WTC11 (cell line): ENCODE measurements at regions of chr10 and their contacts with region 1.

Region 1: GRCh38 chr10:103659674-103660363 is 166.3 kb downstream of the NEURL1 start:
- DNase-seq: peak; percentile 23
- ATAC-seq: peak; percentile 47
- H3K4me3 Mint-ChIP-seq: no peak overlapping the region; the same call in 1 of the 2 replicates
- H3K27ac Mint-ChIP-seq: no peak overlapping the region; the same call in 1 of the 2 replicates
- H3K4me1 Mint-ChIP-seq: peaks cover 16% of the 10 kb centered on the region
- H3K27me3 Mint-ChIP-seq: no peaks in the 10 kb centered on the region
- CTCF ChIP-seq: no peak

Region 2: GRCh38 chr10:103584216-103585010 is 75.4 kb before region 1 on chr10:
- CTCF ChIA-PET with region 1: no interaction called
- POLR2A ChIA-PET with region 1: no interaction called
- DNase-seq: peak; percentile 43
- ATAC-seq: peak; percentile 24
- H3K4me3 Mint-ChIP-seq: peak overlapping the region; percentile 50; the same call in 1 of the 2 replicates
- H3K27ac Mint-ChIP-seq: no peak overlapping the region
- H3K4me1 Mint-ChIP-seq: 0 out of 2 replicates have a peak, but pooled peaks cover 2% of the 10 kb centered on the region
- H3K27me3 Mint-ChIP-seq: peaks cover 42% of the 10 kb centered on the region
- CTCF ChIP-seq: no peak

Region 3: GRCh38 chr10:103637927-103638557 is 21.8 kb before region 1 on chr10:
- CTCF ChIA-PET with region 1: interaction called, 14 read pairs
- POLR2A ChIA-PET with region 1: interaction called, 12 read pairs
- DNase-seq: no peak
- ATAC-seq: no peak
- H3K4me3 Mint-ChIP-seq: no peak overlapping the region
- H3K27ac Mint-ChIP-seq: no peak overlapping the region
- H3K4me1 Mint-ChIP-seq: peaks cover 51% of the 10 kb centered on the region
- H3K27me3 Mint-ChIP-seq: no peaks in the 10 kb centered on the region
- CTCF ChIP-seq: no peak

Region 4: DNA sequence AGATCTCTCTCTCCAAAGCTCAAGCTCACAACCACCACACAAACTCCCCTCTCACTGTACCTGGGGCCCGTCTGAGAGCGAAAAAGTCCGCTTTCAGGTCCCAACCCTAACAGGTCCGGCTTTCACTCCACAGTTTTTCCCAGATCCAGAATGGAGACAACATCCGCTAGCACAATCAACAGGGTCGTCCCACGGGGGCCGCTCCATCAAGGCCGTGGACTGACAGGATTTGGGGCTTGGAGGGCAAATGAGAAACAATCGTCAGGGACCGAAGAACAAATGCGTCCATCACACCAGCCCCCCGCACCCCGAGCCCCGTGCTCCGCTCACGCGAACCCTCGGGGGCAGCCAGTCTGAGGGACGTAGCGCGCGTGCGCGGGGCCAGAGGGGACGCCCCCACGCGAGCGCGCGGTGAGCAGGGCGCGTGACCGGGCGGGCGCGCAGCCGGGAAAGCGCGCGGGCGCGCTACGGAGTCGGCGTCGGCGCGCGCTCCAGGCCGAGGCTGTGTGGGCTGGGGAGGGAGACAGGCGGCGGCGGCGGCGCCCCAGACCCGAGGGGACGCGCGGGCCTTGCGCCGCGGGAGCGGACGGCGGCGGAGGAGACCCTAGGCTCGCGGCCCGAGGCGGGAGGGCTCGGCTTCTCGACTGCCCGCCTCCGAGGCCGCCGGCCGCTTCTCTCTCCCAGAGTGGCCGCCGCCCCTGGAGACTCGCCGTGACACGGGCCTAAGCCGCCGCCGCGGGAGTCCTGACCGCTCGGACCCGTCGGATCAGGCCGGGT is 307.0 kb after region 1 on chr10 and contains the start of gene SLK:
- CTCF ChIA-PET with region 1: no interaction called
- POLR2A ChIA-PET with region 1: no interaction called
- DNase-seq: peak; percentile 57
- ATAC-seq: peak; percentile 84
- H3K4me3 Mint-ChIP-seq: peak within 1 kb of the TSS; percentile 92
- H3K27ac Mint-ChIP-seq: peak within 1 kb of the TSS; percentile 47; the same call in 1 of the 2 replicates
- H3K4me1 Mint-ChIP-seq: peaks cover 31% of the 10 kb centered on the region
- H3K27me3 Mint-ChIP-seq: peaks cover 13% of the 10 kb centered on the region
- CTCF ChIP-seq: no peak
- total RNA-seq, gene SLK: 17.6 to 19.2 TPM (median 18.9 TPM) in 3 replicates

Region 5: GRCh38 chr10:104322416-104322782 is 662.6 kb after region 1 on chr10:
- CTCF ChIA-PET with region 1: no interaction called
- POLR2A ChIA-PET with region 1: no interaction called
- DNase-seq: no peak
- ATAC-seq: no peak
- H3K4me3 Mint-ChIP-seq: no peak overlapping the region
- H3K27ac Mint-ChIP-seq: peak overlapping the region; percentile 48
- H3K4me1 Mint-ChIP-seq: peaks cover 94% of the 10 kb centered on the region
- H3K27me3 Mint-ChIP-seq: no peaks in the 10 kb centered on the region
- CTCF ChIP-seq: no peak